H1 (cell line): ENCODE measurements at regions of chr11 and their contacts with region 1.

Region 1: DNA sequence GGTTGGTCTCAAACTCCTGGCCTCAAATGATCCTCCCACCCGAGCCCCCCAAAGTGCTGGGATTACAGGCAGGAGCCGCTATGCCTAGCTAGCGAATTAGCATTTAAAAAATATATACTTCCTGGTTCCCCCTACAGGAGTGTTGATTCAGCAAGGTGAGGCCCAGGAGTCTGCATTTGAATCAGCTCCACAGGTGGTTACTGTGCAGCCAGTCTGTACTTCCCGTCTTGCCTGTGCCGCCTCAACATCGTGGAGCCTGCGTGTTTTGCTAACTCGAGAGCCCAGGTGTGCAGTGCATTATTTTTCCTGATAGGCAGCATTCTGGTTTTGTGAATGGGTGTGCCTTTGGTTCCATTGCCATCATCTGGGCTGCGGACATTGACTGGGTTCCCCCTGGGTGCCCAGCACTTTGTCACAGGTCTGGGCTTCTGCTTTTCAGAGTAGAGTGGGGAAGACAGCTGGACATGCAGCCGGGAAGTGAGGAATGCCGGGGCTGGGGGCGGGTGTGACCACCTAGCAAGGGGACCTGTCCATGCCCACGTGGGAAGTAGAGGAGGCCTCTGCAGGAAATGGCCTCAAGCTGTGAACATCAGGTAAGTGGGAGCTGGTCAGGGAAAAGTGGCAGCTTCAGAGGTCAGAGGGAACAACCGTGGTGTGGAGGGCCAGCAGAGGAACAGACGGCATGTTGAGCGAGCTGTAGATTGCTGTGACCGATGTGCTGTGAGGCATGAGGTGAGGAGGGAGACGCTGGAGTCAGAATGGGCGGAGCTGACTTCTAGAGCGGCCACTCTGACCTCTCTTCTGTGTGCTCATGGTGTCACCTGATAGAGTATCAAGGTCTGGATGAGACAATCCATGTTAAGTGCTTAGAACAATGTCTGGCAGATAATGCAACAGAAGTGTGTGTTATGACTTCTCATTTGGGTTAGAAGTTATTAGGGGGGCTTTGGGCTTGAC is 42.2 kb downstream of the PPFIA1 start:
- DNase-seq: no peak
- H3K4me3 ChIP-seq: peak overlapping the region in 1 of 4 experiments; percentile 1; a peak in 1 of 8 replicates
- H3K27ac ChIP-seq: no peak overlapping the region; the same call in 1 of the 2 replicates
- H3K4me1 ChIP-seq: peaks cover 11 to 33% (median 21%) of the 10 kb centered on the region in 4 experiments
- H3K27me3 ChIP-seq: no peaks in the 10 kb centered on the region
- CTCF ChIP-seq: no peak
- EP300 ChIP-seq: no peak
- POLR2A ChIP-seq: no peak
- RAD21 ChIP-seq: no peak

Region 2: GRCh38 chr11:70323806-70324205 is 11.1 kb after region 1 on chr11:
- CTCF ChIA-PET with region 1: interaction called, 6 read pairs
- POLR2A ChIA-PET with region 1: interaction called, 16 read pairs
- DNase-seq: no peak
- H3K4me3 ChIP-seq: no peak overlapping the region
- H3K27ac ChIP-seq: no peak overlapping the region
- H3K4me1 ChIP-seq: peaks cover 0 to 8% (median 1%) of the 10 kb centered on the region in 4 experiments; a peak in 2 of 7 replicates
- H3K27me3 ChIP-seq: no peaks in the 10 kb centered on the region
- CTCF ChIP-seq: no peak
- EP300 ChIP-seq: no peak
- POLR2A ChIP-seq: no peak
- RAD21 ChIP-seq: no peak